Activated CD4-positive, alpha-beta memory T cell treated with anti-CD3 and anti-CD28 coated beads for 36 hours (primary cell): ENCODE measurements at regions of chr17 and their contacts with region 1.

Region 1: GRCh38 chr17:76278952-76279741 is 14.0 kb downstream of the UBALD2 start:
- DNase-seq: peak; percentile 90
- H3K4me3 Mint-ChIP-seq: no peak overlapping the region
- H3K27ac Mint-ChIP-seq: no peak overlapping the region
- H3K4me1 Mint-ChIP-seq: peaks cover 14% of the 10 kb centered on the region
- H3K27me3 Mint-ChIP-seq: no peaks in the 10 kb centered on the region

Region 2: GRCh38 chr17:76014184-76014924 is 264.8 kb before region 1 on chr17:
- CTCF ChIA-PET with region 1: interaction called, 35 read pairs
- POLR2A ChIA-PET with region 1: no interaction called
- intact Hi-C with region 1: no loop called
- DNase-seq: peak; percentile 85
- H3K4me3 Mint-ChIP-seq: no peak overlapping the region
- H3K27ac Mint-ChIP-seq: peak overlapping the region; percentile 15
- H3K4me1 Mint-ChIP-seq: peaks cover 5% of the 10 kb centered on the region
- H3K27me3 Mint-ChIP-seq: no peaks in the 10 kb centered on the region

Region 3: DNA sequence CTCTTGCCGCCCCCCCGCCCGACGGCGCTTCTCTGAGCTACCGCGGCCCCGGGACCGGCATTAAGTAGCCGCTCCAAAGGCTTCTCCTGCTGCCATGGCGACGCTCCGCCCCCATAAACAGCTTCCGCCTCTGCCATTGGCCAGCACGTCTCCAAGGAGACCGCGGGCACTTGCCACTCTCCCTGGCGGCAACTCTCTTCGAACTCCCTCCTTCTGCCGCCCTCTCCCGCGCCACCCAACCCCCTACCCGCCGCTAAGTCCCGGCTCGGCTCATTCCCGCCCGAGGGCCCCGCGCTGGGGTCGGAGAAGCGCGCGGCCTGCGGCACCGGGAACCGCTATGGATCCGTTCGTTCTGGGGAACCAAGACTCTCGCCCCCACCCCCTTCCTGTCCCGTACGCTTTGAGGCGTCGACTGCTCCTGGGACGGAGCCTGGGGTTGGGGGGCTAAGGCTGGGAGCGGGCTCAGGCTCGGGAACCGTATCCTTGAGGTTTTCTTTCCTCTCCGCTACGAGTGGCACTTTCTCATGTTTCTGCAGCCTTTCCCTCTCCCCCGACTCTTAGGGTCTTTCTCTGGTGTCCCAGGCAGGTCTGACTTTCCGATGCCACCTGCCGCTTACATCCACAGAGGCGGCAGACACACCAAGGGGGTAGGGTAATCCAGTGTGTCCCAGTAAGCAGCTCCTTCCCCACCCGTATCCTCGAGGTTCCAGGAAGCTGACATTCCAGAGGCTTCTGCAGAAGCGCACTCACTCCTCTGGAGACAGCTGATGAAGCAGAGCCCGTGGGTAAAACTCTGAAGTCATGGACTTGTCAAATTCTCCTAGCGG is 137.7 kb before region 1 on chr17 and contains the start of gene FOXJ1:
- CTCF ChIA-PET with region 1: interaction called, 14 read pairs
- POLR2A ChIA-PET with region 1: no interaction called
- intact Hi-C with region 1: no loop called
- DNase-seq: peak; percentile 95
- H3K4me3 Mint-ChIP-seq: peak within 1 kb of the TSS; percentile 67
- H3K27ac Mint-ChIP-seq: no peak within 1 kb of the TSS
- H3K4me1 Mint-ChIP-seq: peaks cover 55% of the 10 kb centered on the region
- H3K27me3 Mint-ChIP-seq: peaks cover 8% of the 10 kb centered on the region
- total RNA-seq, gene FOXJ1: 0.22 to 0.29 TPM

Region 4: DNA sequence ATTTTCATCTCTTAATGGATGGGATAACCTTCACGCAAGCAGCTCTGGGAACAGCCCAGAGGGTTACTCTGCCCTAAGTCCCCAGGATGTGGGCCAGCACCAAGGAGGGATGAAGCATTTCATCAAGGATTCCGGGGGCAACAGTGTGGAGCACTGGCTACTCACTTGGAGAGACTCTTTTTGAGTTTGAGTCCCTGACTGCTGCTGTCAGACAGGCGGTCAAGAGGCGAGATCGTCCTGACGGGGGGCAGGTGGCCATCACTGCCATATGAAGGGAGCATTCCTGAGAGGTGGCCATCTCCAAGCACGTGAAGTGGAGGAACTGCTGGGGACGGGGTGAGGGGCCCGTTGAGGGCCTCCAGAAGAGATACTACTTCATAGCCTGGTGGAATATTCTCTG is 120.0 kb before region 1 on chr17:
- CTCF ChIA-PET with region 1: interaction called, 10 read pairs
- POLR2A ChIA-PET with region 1: no interaction called
- intact Hi-C with region 1: no loop called
- DNase-seq: no peak
- H3K4me3 Mint-ChIP-seq: no peak overlapping the region
- H3K27ac Mint-ChIP-seq: no peak overlapping the region
- H3K4me1 Mint-ChIP-seq: no peaks in the 10 kb centered on the region
- H3K27me3 Mint-ChIP-seq: no peaks in the 10 kb centered on the region

Region 5: DNA sequence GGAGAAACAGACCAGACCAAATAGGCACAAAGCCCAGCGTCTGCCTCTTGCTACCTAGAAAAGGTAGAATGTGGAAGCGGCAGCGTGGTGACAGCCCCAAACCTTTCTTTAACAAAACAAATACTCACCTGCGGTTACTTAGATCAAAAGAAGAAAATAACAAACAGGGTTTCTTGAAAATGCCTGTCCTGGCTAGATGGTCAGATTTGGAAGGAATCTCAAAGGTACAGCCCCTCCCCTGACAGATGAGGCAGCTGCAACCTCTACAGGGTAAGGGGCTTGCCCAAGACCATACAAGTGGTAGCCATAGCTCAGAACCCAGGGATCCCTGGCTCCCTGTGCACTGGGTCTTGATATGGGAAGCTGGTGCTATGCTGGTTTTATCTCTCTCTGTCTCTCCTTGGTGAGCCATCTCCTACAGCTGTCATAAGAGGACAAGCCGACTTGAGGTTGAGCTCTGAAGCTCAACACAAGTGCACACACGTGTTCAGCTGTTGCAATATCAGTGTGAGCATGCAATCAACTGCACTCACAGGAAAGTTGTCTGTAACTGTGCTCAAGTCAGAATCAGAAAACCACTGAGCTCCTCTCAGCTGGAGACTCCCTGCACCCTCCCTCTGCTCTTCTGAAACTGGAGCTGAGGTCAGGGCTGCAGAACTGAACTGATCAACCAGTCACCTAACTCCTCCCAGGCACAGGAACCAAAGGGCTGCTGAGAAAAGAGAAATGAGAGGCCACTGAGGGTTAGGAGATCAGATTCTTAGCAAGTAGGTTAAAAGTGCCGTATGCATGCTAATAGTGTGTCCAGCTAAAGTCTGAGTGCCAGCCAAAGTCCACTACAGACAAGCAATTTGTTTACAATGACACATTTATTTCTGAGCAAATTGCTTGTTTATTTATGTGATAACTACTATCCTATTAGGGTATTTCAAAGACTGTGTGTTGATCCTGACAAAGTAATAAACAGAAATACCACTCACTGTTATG is 32.8 kb before region 1 on chr17:
- CTCF ChIA-PET with region 1: interaction called, 22 read pairs
- POLR2A ChIA-PET with region 1: interaction called, 3 read pairs
- intact Hi-C with region 1: no loop called
- DNase-seq: peak; percentile 88
- H3K4me3 Mint-ChIP-seq: peak overlapping the region; percentile 52
- H3K27ac Mint-ChIP-seq: peak overlapping the region; percentile 90
- H3K4me1 Mint-ChIP-seq: peaks cover 49% of the 10 kb centered on the region
- H3K27me3 Mint-ChIP-seq: no peaks in the 10 kb centered on the region

Region 6: DNA sequence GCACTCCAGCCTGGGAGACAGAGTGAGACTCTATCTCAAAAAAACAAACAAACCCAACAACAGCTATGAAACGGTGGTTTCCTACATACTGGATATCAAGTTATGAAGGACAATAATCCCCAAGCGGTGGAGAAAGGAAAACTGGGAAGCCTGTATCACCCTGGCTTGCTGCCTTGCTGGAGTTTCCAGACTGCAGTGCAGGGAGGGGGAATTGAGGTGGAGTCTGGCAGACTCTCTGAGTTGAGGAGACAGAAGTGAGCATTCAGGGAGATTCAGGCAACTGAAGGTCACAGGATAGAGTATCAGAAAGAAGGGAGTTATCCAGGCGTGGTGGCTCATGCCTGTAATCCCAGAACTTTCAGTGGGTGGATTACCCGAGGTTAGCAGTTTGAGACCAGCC is 17.0 kb after region 1 on chr17:
- CTCF ChIA-PET with region 1: interaction called, 13 read pairs
- POLR2A ChIA-PET with region 1: no interaction called
- intact Hi-C with region 1: no loop called
- DNase-seq: no peak
- H3K4me3 Mint-ChIP-seq: no peak overlapping the region
- H3K27ac Mint-ChIP-seq: no peak overlapping the region
- H3K4me1 Mint-ChIP-seq: peaks cover 3% of the 10 kb centered on the region
- H3K27me3 Mint-ChIP-seq: no peaks in the 10 kb centered on the region

Region 7: GRCh38 chr17:76408052-76408849 is 129.1 kb after region 1 on chr17:
- CTCF ChIA-PET with region 1: no interaction called
- POLR2A ChIA-PET with region 1: no interaction called
- intact Hi-C with region 1: no loop called
- DNase-seq: peak; percentile 82
- H3K4me3 Mint-ChIP-seq: no peak overlapping the region
- H3K27ac Mint-ChIP-seq: no peak overlapping the region
- H3K4me1 Mint-ChIP-seq: peaks cover 8% of the 10 kb centered on the region
- H3K27me3 Mint-ChIP-seq: no peaks in the 10 kb centered on the region